PC-3 (cell line): ENCODE measurements at regions of chr7 and their contacts with region 1.

Region 1: GRCh38 chr7:131604841-131605279 is 48.4 kb upstream of the PODXL start:
- DNase-seq: peak; percentile 79
- ATAC-seq: peak; percentile 79
- H3K4me3 ChIP-seq: no peak overlapping the region
- H3K27ac ChIP-seq: 0 out of 2 replicates have a peak overlapping the region, but pooled peaks have one; percentile 3
- H3K4me1 ChIP-seq: peaks cover 26% of the 10 kb centered on the region
- H3K27me3 ChIP-seq: no peaks in the 10 kb centered on the region
- CTCF ChIP-seq: no peak

Region 2: GRCh38 chr7:131546583-131547111 is 58.2 kb before region 1 on chr7:
- CTCF ChIA-PET with region 1: no interaction called
- POLR2A ChIA-PET with region 1: no interaction called
- intact Hi-C with region 1: no loop called
- DNase-seq: peak; percentile 48
- ATAC-seq: no peak
- H3K4me3 ChIP-seq: no peak overlapping the region
- H3K27ac ChIP-seq: no peak overlapping the region
- H3K4me1 ChIP-seq: no peaks in the 10 kb centered on the region
- H3K27me3 ChIP-seq: no peaks in the 10 kb centered on the region
- CTCF ChIP-seq: peak; percentile 93

Region 3: GRCh38 chr7:131633342-131633843 is 28.5 kb after region 1 on chr7:
- CTCF ChIA-PET with region 1: interaction called, 14 read pairs
- POLR2A ChIA-PET with region 1: no interaction called
- intact Hi-C with region 1: no loop called
- DNase-seq: peak; percentile 86
- ATAC-seq: peak; percentile 85
- H3K4me3 ChIP-seq: no peak overlapping the region
- H3K27ac ChIP-seq: peak overlapping the region; percentile 85
- H3K4me1 ChIP-seq: peaks cover 39% of the 10 kb centered on the region
- H3K27me3 ChIP-seq: no peaks in the 10 kb centered on the region
- CTCF ChIP-seq: no peak

Region 4: GRCh38 chr7:132351954-132352499 is 747.2 kb after region 1 on chr7:
- CTCF ChIA-PET with region 1: no interaction called
- POLR2A ChIA-PET with region 1: no interaction called
- intact Hi-C with region 1: no loop called
- DNase-seq: no peak
- ATAC-seq: no peak
- H3K4me3 ChIP-seq: no peak overlapping the region
- H3K27ac ChIP-seq: no peak overlapping the region
- H3K4me1 ChIP-seq: no peaks in the 10 kb centered on the region
- H3K27me3 ChIP-seq: peaks cover 34% of the 10 kb centered on the region
- CTCF ChIP-seq: no peak